Activated CD4-positive, alpha-beta T cell treated with anti-CD3 and anti-CD28 coated beads for 36 hours (primary cell): ENCODE measurements at regions of chr12 and their contacts with region 1.

Region 1: GRCh38 chr12:20829919-20830318 is 19.4 kb downstream of the SLCO1B3 start:
- DNase-seq: no peak
- ATAC-seq: no peak
- H3K4me3 Mint-ChIP-seq: no peak overlapping the region
- H3K27ac Mint-ChIP-seq: no peak overlapping the region
- H3K4me1 Mint-ChIP-seq: no peaks in the 10 kb centered on the region
- H3K27me3 Mint-ChIP-seq: no peaks in the 10 kb centered on the region

Region 2: GRCh38 chr12:20289512-20289911 is 540.4 kb before region 1 on chr12:
- CTCF ChIA-PET with region 1: no interaction called
- POLR2A ChIA-PET with region 1: no interaction called
- intact Hi-C with region 1: loop called in 1 of 2 experiments (anchors 5 kb)
- DNase-seq: no peak
- ATAC-seq: no peak
- H3K4me3 Mint-ChIP-seq: no peak overlapping the region
- H3K27ac Mint-ChIP-seq: no peak overlapping the region
- H3K4me1 Mint-ChIP-seq: no peaks in the 10 kb centered on the region
- H3K27me3 Mint-ChIP-seq: no peaks in the 10 kb centered on the region